Activated B cell treated with CpG ODN at 0.5 μM for 24 hours (primary cell): ENCODE measurements at regions of chr5 and their contacts with region 1.

Region 1: GRCh38 chr5:171405601-171406005 is 13.8 kb upstream of the FGF18 start:
- DNase-seq: no peak
- ATAC-seq: no peak
- H3K4me3 Mint-ChIP-seq: no peak overlapping the region
- H3K27ac Mint-ChIP-seq: no peak overlapping the region
- H3K4me1 Mint-ChIP-seq: no peaks in the 10 kb centered on the region
- H3K27me3 Mint-ChIP-seq: no peaks in the 10 kb centered on the region
- CTCF ChIP-seq: no peak

Region 2: DNA sequence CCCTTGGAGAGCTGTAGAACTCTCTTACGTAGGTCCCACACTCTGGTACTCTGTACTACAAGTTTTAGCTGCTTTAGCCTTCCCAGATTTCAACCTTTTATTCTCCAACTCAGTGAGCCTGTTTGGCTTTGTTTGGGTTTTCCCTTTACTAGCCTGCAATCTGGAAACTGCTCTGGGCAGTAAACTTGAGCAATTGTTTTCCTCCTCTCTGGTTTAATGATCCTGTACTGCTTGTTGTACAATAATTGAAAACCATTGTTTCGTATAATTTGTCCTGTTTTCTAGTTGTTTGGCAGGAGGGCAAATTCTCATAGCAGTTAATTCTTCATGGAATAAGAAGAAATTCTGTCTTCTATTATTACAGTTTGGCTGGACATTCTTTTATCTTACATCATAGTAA is 159.4 kb before region 1 on chr5:
- CTCF ChIA-PET with region 1: no interaction called
- POLR2A ChIA-PET with region 1: no interaction called
- intact Hi-C with region 1: no loop called
- DNase-seq: no peak
- ATAC-seq: no peak
- H3K4me3 Mint-ChIP-seq: no peak overlapping the region
- H3K27ac Mint-ChIP-seq: no peak overlapping the region
- H3K4me1 Mint-ChIP-seq: no peaks in the 10 kb centered on the region
- H3K27me3 Mint-ChIP-seq: peaks cover 4% of the 10 kb centered on the region
- CTCF ChIP-seq: no peak

Region 3: GRCh38 chr5:171392585-171393159 is 12.9 kb before region 1 on chr5:
- CTCF ChIA-PET with region 1: interaction called, 3 read pairs
- POLR2A ChIA-PET with region 1: interaction called, 13 read pairs
- intact Hi-C with region 1: no loop called
- DNase-seq: no peak
- ATAC-seq: no peak
- H3K4me3 Mint-ChIP-seq: peak overlapping the region; percentile 38
- H3K27ac Mint-ChIP-seq: peak overlapping the region; percentile 50
- H3K4me1 Mint-ChIP-seq: peaks cover 63% of the 10 kb centered on the region
- H3K27me3 Mint-ChIP-seq: no peaks in the 10 kb centered on the region
- CTCF ChIP-seq: no peak